A549 (cell line): ENCODE measurements at regions of chr11 and their contacts with region 1.

Region 1: DNA sequence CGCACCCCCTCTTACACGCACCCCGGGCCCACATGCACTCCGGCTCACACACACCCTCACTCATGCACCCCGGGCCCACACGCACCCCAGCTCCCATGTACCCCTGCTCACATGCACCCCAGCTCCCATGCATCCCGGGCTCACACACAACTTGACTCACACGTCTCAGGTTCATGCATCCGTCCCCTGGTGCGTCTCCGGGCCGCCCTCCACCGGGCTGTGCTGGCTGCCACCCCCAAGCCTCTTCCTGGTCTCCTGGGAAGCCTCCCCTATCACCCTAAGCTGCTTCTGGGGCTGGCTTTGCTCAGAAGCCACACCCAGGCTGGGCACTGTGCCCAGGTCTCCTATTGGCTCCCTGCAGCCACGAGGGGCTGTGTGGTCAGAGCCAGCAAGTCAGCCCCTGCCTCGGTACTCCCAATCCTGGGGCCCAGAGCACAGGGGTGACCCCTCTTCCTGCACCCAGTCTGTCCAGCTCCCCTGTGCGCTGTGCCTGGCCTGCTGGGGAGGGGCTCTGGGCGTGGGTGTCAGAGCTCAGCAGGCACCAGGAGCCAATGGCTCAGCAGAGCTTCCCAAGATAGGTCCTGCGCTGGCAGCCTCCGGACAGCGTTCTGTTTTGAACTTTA is 17.0 kb downstream of the TSPAN4 start:
- DNase-seq: peak; percentile 65 to 70
- ATAC-seq: peak; percentile 16 to 60
- H3K4me3 ChIP-seq: no peak overlapping the region
- H3K27ac ChIP-seq: peak overlapping the region in 1 of 2 experiments; percentile 71; a peak in 3 of 6 replicates
- H3K4me1 ChIP-seq: peaks cover 49% of the 10 kb centered on the region
- CTCF ChIP-seq: no peak
- EP300 ChIP-seq: no peak
- POLR2A ChIP-seq: no peak
- RAD21 ChIP-seq: no peak

Region 2: GRCh38 chr11:848380-848931 is 11.2 kb before region 1 on chr11:
- CTCF ChIA-PET with region 1: interaction called, 37 read pairs
- POLR2A ChIA-PET with region 1: interaction called, 7 read pairs
- DNase-seq: peak in 1 of 2 experiments; percentile 72
- ATAC-seq: peak in 1 of 2 experiments; percentile 9; a peak in 2 of 6 replicates
- H3K4me3 ChIP-seq: no peak overlapping the region
- H3K27ac ChIP-seq: peak overlapping the region; percentile 37 to 99; a peak in 3 of 6 replicates
- H3K4me1 ChIP-seq: peaks cover 67% of the 10 kb centered on the region
- CTCF ChIP-seq: peak; percentile 64
- EP300 ChIP-seq: no peak
- POLR2A ChIP-seq: no peak
- RAD21 ChIP-seq: peak; percentile 72 to 78

Region 3: GRCh38 chr11:870127-870413 is 10.4 kb after region 1 on chr11:
- CTCF ChIA-PET with region 1: interaction called, 14 read pairs
- POLR2A ChIA-PET with region 1: no interaction called
- DNase-seq: no peak
- ATAC-seq: peak; percentile 35 to 48; a peak in 5 of 6 replicates
- H3K4me3 ChIP-seq: no peak overlapping the region
- H3K27ac ChIP-seq: no peak overlapping the region
- H3K4me1 ChIP-seq: peaks cover 24% of the 10 kb centered on the region; the same call in 2 of the 3 replicates
- CTCF ChIP-seq: no peak; the same call in 1 of the 3 replicates
- EP300 ChIP-seq: no peak
- POLR2A ChIP-seq: no peak
- RAD21 ChIP-seq: no peak